Right cardiac atrium (tissue), 5 donors: ENCODE measurements at regions of chr14 and their contacts with region 1.

Region 1: GRCh38 chr14:76956316-76957090 is 72.0 kb downstream of the IRF2BPL start:
- DNase-seq: peak; percentile 91 to 97 (median 95)
- ATAC-seq: peak; percentile 85
- H3K4me3 ChIP-seq: peak overlapping the region; percentile 1
- H3K27ac ChIP-seq: peak overlapping the region; percentile 100
- H3K4me1 ChIP-seq: peaks cover 6% of the 10 kb centered on the region
- H3K27me3 ChIP-seq: no peaks in the 10 kb centered on the region

Region 2: DNA sequence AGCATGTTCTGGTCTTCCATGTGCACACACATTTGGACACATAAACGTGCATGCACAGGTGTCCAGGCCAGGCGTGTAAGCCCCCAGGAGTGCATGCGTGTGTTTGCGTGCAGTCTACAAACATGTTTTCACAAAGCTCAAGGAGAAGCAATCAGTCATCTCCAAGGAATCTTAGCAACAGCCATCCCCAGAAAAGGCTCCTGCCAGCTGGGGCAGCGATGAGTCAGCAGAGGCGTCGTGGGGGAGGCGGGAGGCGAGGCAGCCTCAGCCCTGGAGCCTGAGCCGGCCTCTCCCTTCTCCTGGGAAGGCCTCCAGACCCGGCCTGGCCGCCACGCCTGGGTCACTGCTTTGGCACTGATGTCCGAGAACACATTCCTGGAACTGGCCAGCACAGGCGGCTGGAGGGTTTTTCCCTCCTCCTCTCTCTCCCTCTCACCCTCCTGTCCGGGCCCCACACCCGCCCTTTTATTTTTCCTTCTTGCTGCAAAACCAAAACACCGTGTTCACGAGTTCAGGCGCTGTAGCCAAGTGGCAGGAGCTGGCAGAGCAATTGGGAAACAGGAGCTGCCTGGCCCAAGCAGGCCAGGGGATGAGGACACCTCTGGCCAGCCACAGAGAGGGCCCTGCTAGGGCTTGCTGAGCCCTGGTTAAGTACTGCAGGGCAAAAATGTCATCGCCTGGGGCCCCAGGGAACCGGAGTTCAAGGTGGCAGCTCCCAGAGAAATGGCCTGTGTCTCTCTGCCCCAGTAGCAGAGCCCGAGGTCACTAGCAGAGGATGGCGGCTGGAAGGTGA is 37.6 kb before region 1 on chr14:
- intact Hi-C with region 1: loop called in 1 of 4 experiments (anchors 5 kb)
- DNase-seq: peak; percentile 97 to 99 (median 99)
- ATAC-seq: peak; percentile 93
- H3K4me3 ChIP-seq: no peak overlapping the region
- H3K27ac ChIP-seq: peak overlapping the region; percentile 97
- H3K4me1 ChIP-seq: peaks cover 27% of the 10 kb centered on the region
- H3K27me3 ChIP-seq: no peaks in the 10 kb centered on the region

Region 3: DNA sequence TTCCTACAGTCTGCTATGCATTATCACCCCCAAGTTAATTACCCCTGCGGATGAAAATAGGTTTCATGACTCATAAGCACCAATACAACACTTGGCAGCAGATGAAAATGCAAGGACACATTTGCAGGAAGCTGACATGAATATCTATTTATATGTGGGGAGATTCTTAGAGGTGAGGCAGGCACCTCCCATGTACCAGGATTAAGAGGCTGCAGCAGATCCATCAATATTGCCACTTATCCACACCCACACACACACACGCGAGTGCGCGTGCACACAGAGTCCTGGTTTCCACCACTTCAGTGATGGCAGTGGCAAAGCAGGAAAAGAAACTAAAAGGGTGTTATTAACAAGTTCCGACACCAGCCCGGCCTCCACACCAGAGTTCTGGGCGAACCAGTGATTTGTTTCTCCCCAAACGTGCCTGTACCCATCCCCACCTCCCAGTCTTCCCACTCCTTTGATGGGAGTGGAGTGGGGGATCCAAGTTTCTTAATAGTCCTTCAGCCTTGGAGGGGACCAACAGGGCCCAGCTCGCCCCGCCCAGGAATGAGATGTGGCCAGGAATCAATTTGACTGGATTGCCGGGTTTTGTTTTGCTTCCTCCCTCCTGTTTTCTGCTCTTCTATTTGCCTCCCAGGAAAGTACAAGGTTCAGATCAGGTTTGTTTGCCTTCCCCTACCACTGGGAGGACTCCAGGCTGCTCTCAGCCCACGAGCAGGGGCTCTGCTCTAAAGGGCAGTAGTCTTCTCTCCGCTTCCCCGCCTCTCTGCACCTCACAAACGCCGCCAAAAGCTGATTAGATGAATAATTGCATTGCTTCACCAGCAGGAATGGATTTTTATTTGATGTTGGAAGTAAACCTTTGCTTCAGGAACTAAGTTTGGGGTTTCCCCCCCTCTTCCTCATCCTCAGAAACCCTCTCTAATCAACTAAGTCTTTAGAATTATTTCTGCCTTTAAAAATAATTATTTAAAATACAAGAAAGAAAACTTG is 66.8 kb after region 1 on chr14:
- intact Hi-C with region 1: loop called (anchors 5 kb)
- DNase-seq: peak in 2 of 3 donors; percentile 62 to 68
- ATAC-seq: peak; percentile 3 to 10
- H3K4me3 ChIP-seq: peak overlapping the region; percentile 95
- H3K27ac ChIP-seq: peak overlapping the region; percentile 94
- H3K4me1 ChIP-seq: peaks cover 9% of the 10 kb centered on the region
- H3K27me3 ChIP-seq: no peaks in the 10 kb centered on the region

Region 4: GRCh38 chr14:77028384-77029231 is 72.1 kb after region 1 on chr14 and contains the start of gene IRF2BPL:
- intact Hi-C with region 1: loop called (anchors 5 kb)
- DNase-seq: peak; percentile 99 to 100 (median 100)
- ATAC-seq: peak; percentile 77 to 81
- H3K4me3 ChIP-seq: peak within 1 kb of the TSS; percentile 95
- H3K27ac ChIP-seq: peak within 1 kb of the TSS; percentile 99
- H3K4me1 ChIP-seq: peaks cover 8% of the 10 kb centered on the region
- H3K27me3 ChIP-seq: no peaks in the 10 kb centered on the region
- total RNA-seq, gene IRF2BPL: 43.5 to 61.2 (median 51.5) TPM